Esophagus muscularis mucosa (tissue), 4 donors: ENCODE measurements at regions of chr14 and their contacts with region 1.

Region 1: DNA sequence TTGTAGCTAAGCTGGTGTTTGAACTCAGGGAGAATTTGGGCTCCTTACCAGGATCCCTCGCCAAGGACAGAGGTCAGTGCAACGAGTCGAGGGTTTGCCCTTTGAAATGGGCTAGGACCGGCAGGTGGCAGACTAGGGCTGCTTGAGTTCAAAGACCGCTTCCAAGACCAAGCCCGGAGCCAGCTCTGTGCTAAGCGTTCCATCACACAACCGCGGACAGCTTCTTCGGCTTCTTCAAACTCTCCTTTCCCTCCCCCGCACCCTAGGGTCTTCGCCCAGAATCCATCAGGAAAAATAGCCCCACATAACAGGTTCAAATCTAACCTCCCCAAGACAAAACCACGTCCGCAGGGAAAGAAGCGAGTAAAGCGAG is 705 bp upstream of the FLVCR2 start:
- DNase-seq: peak; percentile 95
- H3K4me3 ChIP-seq: peak overlapping the region; percentile 63 to 69 (median 64)
- H3K27ac ChIP-seq: peak overlapping the region; percentile 82 to 91 (median 84)
- H3K4me1 ChIP-seq: peaks cover 17 to 42% (median 28%) of the 10 kb centered on the region in 4 donors
- H3K27me3 ChIP-seq: no peaks in the 10 kb centered on the region
- CTCF ChIP-seq: peak; percentile 78 to 89 (median 79)
- EP300 ChIP-seq: no peak
- POLR2A ChIP-seq: no peak

Region 2: DNA sequence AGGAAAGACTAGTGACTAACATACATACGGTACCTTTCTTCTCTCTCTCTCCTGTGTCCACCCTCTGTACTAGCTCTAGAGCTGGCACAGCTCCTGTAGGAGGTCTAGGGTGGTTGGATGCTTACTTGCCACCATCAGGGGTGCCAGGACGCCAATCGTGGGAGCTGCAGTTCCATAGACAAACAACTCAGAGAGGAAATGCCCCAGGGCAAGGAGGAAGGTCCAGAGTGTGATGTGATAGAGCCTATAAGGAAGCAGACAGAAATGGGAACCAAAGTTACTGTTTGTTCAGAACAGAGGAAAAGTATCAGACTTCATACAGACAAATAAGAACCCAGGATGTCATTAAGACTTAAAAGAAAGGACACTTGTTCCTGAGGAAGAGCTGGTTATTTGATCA is 73.9 kb after region 1 on chr14:
- intact Hi-C with region 1: loop called (anchors 1 kb)
- DNase-seq: no peak
- H3K4me3 ChIP-seq: no peak overlapping the region
- H3K27ac ChIP-seq: no peak overlapping the region
- H3K4me1 ChIP-seq: peaks cover 19 to 21% (median 21%) of the 10 kb centered on the region in 4 donors
- H3K27me3 ChIP-seq: no peaks in the 10 kb centered on the region
- CTCF ChIP-seq: no peak
- EP300 ChIP-seq: no peak
- POLR2A ChIP-seq: no peak

Region 3: GRCh38 chr14:75667099-75667765 is 89.5 kb after region 1 on chr14:
- intact Hi-C with region 1: no loop called
- DNase-seq: no peak
- H3K4me3 ChIP-seq: no peak overlapping the region
- H3K27ac ChIP-seq: no peak overlapping the region
- H3K4me1 ChIP-seq: peaks cover 0 to 14% (median 11%) of the 10 kb centered on the region in 4 donors
- H3K27me3 ChIP-seq: no peaks in the 10 kb centered on the region
- CTCF ChIP-seq: no peak
- EP300 ChIP-seq: no peak
- POLR2A ChIP-seq: no peak